ENCODE measurements at regions of chr6 and their contacts with region 1.

Region 1: GRCh38 chr6:43174263-43175112 is 3.4 kb downstream of the SRF start:
- DNase-seq: peak; percentile 99 to 100 (median 100)
- H3K4me3 ChIP-seq: peak overlapping the region; percentile 36 to 91 (median 39)
- H3K4me3 Mint-ChIP-seq: peak overlapping the region; percentile 72 to 79
- H3K27ac ChIP-seq: peak overlapping the region; percentile 54 to 91
- H3K27ac Mint-ChIP-seq: peak overlapping the region; percentile 91 to 96 (median 94)
- H3K4me1 ChIP-seq: peaks cover 43 to 49% of the 10 kb centered on the region in 2 donors
- H3K4me1 Mint-ChIP-seq: peaks cover 42% of the 10 kb centered on the region
- H3K27me3 ChIP-seq: no peaks in the 10 kb centered on the region
- H3K27me3 Mint-ChIP-seq: peaks cover 0 to 5% (median 1%) of the 10 kb centered on the region in 3 donors
- CTCF ChIP-seq: peak; percentile 16

Region 2: GRCh38 chr6:42745707-42746462 is 428.6 kb before region 1 on chr6 and contains the start of gene TBCC:
- intact Hi-C with region 1: loop called in 1 of 2 experiments (anchors 10 kb)
- DNase-seq: peak; percentile 97
- H3K4me3 ChIP-seq: peak within 1 kb of the TSS; percentile 83 to 99 (median 97)
- H3K4me3 Mint-ChIP-seq: peak within 1 kb of the TSS; percentile 100
- H3K27ac ChIP-seq: peak within 1 kb of the TSS; percentile 79 to 97
- H3K27ac Mint-ChIP-seq: peak within 1 kb of the TSS; percentile 95 to 100 (median 100)
- H3K4me1 ChIP-seq: peaks cover 18 to 30% of the 10 kb centered on the region in 2 donors
- H3K4me1 Mint-ChIP-seq: peaks cover 35% of the 10 kb centered on the region
- H3K27me3 ChIP-seq: no peaks in the 10 kb centered on the region
- H3K27me3 Mint-ChIP-seq: no peaks in the 10 kb centered on the region
- CTCF ChIP-seq: no peak
- polyA plus RNA-seq, gene TBCC: 19.3 to 31.3 (median 30.7) TPM

Region 3: DNA sequence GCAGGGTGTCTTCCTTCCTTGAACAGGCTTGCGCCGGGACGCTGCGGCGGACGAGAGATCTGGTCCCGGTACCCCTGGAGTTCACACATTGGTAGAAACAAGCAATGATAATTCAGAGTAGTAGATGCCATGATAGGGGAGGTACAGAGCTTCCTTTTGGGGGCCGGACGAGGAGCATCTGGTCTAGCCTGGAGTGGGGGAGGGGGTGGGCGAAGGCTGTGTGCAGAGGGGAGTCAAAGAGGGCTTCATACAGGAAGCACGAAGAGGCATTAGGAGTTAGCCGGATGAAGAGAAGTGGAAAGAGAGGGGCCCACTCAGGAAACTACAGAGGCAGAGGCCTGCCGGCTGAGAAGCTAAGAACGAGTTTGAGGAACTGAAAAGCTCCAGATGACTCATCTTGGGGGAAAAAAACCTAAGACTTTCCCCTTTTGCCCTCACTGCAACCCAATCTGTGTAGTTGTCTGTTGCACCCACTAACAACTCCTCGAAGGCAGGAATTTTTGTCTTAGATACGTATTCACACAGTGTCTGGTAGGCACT is 244.6 kb before region 1 on chr6:
- intact Hi-C with region 1: loop called in 1 of 2 experiments (anchors 5 kb)
- DNase-seq: peak; percentile 84 to 95 (median 93)
- H3K4me3 ChIP-seq: peak overlapping the region; percentile 72 to 99 (median 86)
- H3K4me3 Mint-ChIP-seq: peak overlapping the region; percentile 99
- H3K27ac ChIP-seq: peak overlapping the region; percentile 93 to 97
- H3K27ac Mint-ChIP-seq: peak overlapping the region; percentile 98 to 100 (median 99)
- H3K4me1 ChIP-seq: peaks cover 62 to 70% of the 10 kb centered on the region in 2 donors
- H3K4me1 Mint-ChIP-seq: peaks cover 59% of the 10 kb centered on the region
- H3K27me3 ChIP-seq: no peaks in the 10 kb centered on the region
- H3K27me3 Mint-ChIP-seq: peaks cover 1 to 3% (median 2%) of the 10 kb centered on the region in 3 donors
- CTCF ChIP-seq: no peak

Region 4: GRCh38 chr6:43035495-43036194 is 138.8 kb before region 1 on chr6:
- intact Hi-C with region 1: no loop called
- DNase-seq: no peak
- H3K4me3 ChIP-seq: no peak overlapping the region
- H3K4me3 Mint-ChIP-seq: no peak overlapping the region
- H3K27ac ChIP-seq: no peak overlapping the region
- H3K27ac Mint-ChIP-seq: peak overlapping the region in 1 of 7 donors; percentile 15
- H3K4me1 ChIP-seq: no peaks in the 10 kb centered on the region
- H3K4me1 Mint-ChIP-seq: no peaks in the 10 kb centered on the region
- H3K27me3 ChIP-seq: no peaks in the 10 kb centered on the region
- H3K27me3 Mint-ChIP-seq: peaks cover 0 to 7% (median 0%) of the 10 kb centered on the region in 3 donors
- CTCF ChIP-seq: no peak

Region 5: DNA sequence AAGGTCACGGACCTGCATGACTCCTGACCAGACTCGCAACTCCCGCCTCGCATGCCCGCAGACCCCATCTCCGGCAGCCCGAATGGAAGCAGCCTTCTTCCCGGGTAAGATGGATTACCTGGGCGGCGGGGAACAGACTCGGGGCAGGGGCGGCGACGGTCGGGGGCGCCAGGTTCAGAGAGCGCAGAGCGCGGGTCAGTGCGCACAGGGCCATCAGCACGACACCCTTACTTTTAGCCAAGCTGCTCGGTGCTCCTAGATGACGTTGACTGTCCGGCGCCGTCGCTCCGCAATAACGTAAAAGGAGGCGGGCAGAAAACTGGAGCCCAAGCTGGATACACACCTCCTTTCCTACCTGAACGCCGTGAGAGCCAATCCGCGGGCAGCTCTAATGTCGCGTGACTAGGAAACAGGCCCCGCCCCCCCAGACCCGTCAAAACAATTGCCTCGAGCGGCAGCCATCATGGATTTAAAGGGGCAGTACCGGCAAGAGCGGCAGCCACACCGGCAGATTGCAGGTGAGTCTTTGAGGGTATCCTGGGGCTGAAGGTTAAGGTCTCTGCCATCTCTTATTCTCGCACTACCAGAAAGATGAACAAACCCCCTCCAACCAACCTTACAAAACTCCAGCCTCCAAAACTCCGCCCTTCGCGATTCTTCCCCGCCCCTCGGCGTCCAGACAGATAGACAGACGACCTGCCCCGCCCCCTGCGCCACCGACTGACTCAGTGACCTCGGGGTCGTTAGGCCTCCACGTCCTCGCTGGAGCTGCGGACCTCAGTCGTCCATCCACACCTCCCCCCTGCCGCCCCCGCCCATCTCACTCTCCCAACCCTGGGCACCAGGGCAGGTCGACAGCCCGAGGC is 115.1 kb before region 1 on chr6 and contains the starts of genes KLC4 and MRPL2:
- intact Hi-C with region 1: loop called (anchors 2 to 10 kb)
- DNase-seq: peak; percentile 98 to 99 (median 98)
- H3K4me3 ChIP-seq: peak within 1 kb of the TSS; percentile 69 to 99 (median 98)
- H3K4me3 Mint-ChIP-seq: peak within 1 kb of the TSS; percentile 85 to 96
- H3K27ac ChIP-seq: peak within 1 kb of the TSS; percentile 64 to 99
- H3K27ac Mint-ChIP-seq: peak within 1 kb of the TSS; percentile 90 to 100 (median 99)
- H3K4me1 ChIP-seq: peaks cover 14 to 23% of the 10 kb centered on the region in 2 donors
- H3K4me1 Mint-ChIP-seq: peaks cover 25% of the 10 kb centered on the region
- H3K27me3 ChIP-seq: no peaks in the 10 kb centered on the region
- H3K27me3 Mint-ChIP-seq: peaks cover 0 to 2% (median 0%) of the 10 kb centered on the region in 3 donors
- CTCF ChIP-seq: no peak
- polyA plus RNA-seq, gene KLC4: 6.0 to 16.2 (median 6.1) TPM
- polyA plus RNA-seq, gene MRPL2: 23.9 to 26.9 (median 26.3) TPM

Region 6: DNA sequence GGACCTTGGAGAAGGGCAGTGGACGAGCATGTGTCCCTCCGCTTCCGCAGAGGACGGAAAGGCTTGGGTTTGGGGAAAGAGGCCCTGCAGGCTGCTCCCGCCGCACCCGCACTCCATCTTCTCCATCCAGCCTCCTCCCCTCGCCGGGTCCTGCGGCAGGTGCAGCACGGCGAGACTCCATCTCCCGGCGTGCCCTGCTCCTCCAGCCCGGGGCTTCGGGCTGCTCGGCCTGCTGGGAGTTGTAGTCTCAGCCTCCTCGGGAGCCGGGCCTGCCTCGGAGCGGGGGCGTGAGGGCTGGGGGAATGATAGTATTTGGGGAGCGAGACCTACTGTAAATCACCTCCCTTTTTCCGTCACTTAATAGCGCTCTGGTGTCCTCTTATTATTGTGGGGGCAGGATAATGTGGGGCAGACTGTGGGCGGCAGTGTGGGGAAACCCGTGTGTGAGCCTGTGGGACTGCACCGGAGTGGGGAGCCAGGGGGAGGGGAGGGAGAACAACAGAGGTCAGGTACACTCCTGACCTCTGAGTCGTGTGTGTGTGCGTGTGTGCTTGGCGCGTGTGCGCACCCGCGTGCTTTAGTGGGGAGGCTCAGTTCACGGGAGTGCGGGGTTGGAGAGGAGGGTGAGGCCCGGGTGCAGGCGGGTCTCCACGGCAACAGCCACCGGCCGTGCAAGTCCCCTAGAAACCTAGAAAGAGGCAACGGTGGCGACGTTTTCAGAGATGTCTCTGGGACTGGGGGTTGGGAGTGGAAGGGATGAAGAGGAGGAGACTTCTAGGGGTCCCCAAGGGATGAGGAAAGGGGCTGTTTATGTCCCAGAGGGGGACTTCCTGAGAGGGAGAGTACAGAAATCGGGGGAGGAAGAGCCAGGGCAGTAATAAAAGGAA is 72.9 kb after region 1 on chr6:
- intact Hi-C with region 1: loop called in 1 of 2 experiments (anchors 10 kb)
- DNase-seq: peak; percentile 46 to 48 (median 46)
- H3K4me3 ChIP-seq: peak overlapping the region; percentile 43 to 90 (median 50)
- H3K4me3 Mint-ChIP-seq: no peak overlapping the region
- H3K27ac ChIP-seq: peak overlapping the region in 1 of 2 donors; percentile 52
- H3K27ac Mint-ChIP-seq: peak overlapping the region in 6 of 7 donors; percentile 18 to 87 (median 58)
- H3K4me1 ChIP-seq: peaks cover 13 to 21% of the 10 kb centered on the region in 2 donors
- H3K4me1 Mint-ChIP-seq: peaks cover 26% of the 10 kb centered on the region
- H3K27me3 ChIP-seq: peaks cover 43 to 80% of the 10 kb centered on the region in 2 donors
- H3K27me3 Mint-ChIP-seq: peaks cover 31 to 48% (median 45%) of the 10 kb centered on the region in 3 donors
- CTCF ChIP-seq: no peak

Region 7: GRCh38 chr6:43516697-43517504 is 342.4 kb after region 1 on chr6 and contains the starts of genes POLR1C and YIPF3:
- intact Hi-C with region 1: loop called (anchors 5 to 10 kb)
- DNase-seq: peak; percentile 98 to 100 (median 98)
- H3K4me3 ChIP-seq: peak within 1 kb of the TSS; percentile 61 to 100 (median 78)
- H3K4me3 Mint-ChIP-seq: no peak within 1 kb of the TSS
- H3K27ac ChIP-seq: peak within 1 kb of the TSS; percentile 35 to 93
- H3K27ac Mint-ChIP-seq: peak within 1 kb of the TSS in 1 of 7 donors; percentile 55
- H3K4me1 ChIP-seq: peaks cover 23 to 36% of the 10 kb centered on the region in 2 donors
- H3K4me1 Mint-ChIP-seq: peaks cover 31% of the 10 kb centered on the region
- H3K27me3 ChIP-seq: no peaks in the 10 kb centered on the region
- H3K27me3 Mint-ChIP-seq: no peaks in the 10 kb centered on the region
- CTCF ChIP-seq: no peak
- polyA plus RNA-seq, gene POLR1C: 4.5 to 18.3 (median 6.1) TPM
- polyA plus RNA-seq, gene YIPF3: 112 to 126 (median 123) TPM

Measured in CD14-positive monocyte (primary cell).